AG04450 (cell line): ENCODE measurements at regions of chr13 and their contacts with region 1.

Region 1: DNA sequence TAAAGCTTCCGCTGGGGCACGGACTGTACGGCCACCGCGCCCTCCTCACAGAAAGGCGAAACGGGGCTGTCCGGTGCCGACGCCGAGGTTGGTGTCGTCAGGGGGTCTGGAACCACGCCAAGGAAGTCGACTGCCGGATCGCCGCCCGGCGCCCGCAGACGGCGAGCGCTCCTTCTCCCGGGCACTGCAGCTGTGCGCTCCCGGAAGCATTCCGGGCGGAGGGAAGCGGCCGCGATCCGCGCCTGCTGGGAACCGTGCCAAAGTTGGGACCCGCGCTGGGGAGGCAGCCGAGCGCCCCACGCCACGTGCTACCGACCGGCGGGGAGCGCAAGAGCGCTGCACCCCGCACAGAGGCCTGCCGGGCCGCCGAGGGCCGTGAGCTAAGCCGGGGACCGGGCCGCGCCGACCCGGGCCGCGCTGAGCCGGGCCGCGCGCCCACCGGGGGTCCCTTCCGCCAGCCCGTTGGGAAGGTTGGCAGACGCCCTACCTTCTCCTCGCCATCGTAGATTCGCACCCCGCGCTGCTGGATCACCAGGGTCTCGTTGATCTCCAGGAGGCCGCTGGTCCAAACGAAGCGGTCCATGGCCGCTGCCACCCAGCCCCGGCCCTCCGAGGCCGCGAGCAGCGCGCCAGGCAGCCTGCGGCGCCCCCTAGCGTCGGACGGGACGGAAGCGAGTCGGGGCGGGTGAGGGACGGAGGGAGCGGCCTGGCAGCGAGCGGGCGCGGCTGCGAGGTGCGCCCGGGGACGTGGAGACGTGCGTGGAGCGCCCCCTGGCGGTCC is at the start of gene VPS36:
- DNase-seq: peak; percentile 83
- H3K4me3 ChIP-seq: peak within 1 kb of the TSS; percentile 87
- H3K27ac ChIP-seq: peak within 1 kb of the TSS; percentile 70
- H3K27me3 ChIP-seq: no peaks in the 10 kb centered on the region
- CTCF ChIP-seq: peak; percentile 88
- polyA plus RNA-seq, gene VPS36: 20.5 and 24.2 TPM in 2 replicates

Region 2: GRCh38 chr13:52141297-52141696 is 308.9 kb before region 1 on chr13:
- CTCF ChIA-PET with region 1: interaction called, 10 read pairs
- POLR2A ChIA-PET with region 1: no interaction called
- DNase-seq: no peak
- H3K4me3 ChIP-seq: no peak overlapping the region
- H3K27ac ChIP-seq: no peak overlapping the region
- H3K27me3 ChIP-seq: no peaks in the 10 kb centered on the region
- CTCF ChIP-seq: 0 out of 2 replicates have a peak, but pooled peaks have one; percentile 11

Region 3: DNA sequence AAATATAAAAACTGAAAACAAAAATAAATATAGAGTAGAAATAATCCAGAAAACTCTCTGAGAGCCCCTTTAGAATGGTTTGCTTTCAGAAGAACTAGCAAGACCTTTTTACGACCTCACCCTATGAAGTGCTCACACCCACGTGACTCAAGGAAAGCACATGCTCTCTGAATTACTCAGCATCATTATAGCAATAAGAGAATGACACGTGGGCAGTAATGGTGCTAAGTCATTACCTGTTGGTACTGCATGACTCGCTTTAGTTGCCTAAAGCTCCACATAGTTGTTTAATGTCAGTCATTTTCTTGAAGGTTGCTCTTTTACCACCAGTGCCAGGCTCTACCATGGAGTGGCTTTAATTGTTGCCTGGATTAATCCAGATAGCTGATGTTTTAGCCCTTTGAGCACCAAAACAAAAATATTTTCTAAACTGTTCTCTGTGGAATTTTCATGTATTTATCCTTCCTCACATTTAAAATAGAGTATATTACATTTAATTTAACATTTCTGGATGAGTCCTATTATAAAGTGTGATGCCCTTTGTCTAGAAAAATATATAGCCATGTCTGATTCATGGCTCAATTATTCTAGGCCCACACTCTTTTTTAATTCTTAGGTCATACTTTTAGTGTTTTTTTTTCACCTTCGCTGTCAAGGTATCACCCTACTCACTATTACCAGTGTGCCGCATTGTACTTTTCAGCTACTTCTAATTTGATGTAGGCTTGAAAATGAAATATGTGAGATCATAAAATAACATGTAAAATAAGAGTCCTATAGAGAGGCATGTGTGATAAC is 101.0 kb before region 1 on chr13:
- CTCF ChIA-PET with region 1: interaction called, 95 read pairs
- POLR2A ChIA-PET with region 1: interaction called, 4 read pairs
- DNase-seq: no peak
- H3K4me3 ChIP-seq: no peak overlapping the region
- H3K27ac ChIP-seq: peak overlapping the region; percentile 62
- H3K27me3 ChIP-seq: no peaks in the 10 kb centered on the region
- CTCF ChIP-seq: no peak

Region 4: GRCh38 chr13:52374848-52375411 is 75.3 kb before region 1 on chr13:
- CTCF ChIA-PET with region 1: interaction called, 13 read pairs
- POLR2A ChIA-PET with region 1: no interaction called
- DNase-seq: no peak
- H3K4me3 ChIP-seq: no peak overlapping the region
- H3K27ac ChIP-seq: no peak overlapping the region
- H3K27me3 ChIP-seq: no peaks in the 10 kb centered on the region
- CTCF ChIP-seq: no peak

Region 5: GRCh38 chr13:52405767-52406494 is 44.3 kb before region 1 on chr13 and contains the start of gene THSD1:
- CTCF ChIA-PET with region 1: interaction called, 40 read pairs
- POLR2A ChIA-PET with region 1: no interaction called
- DNase-seq: no peak
- H3K4me3 ChIP-seq: peak within 1 kb of the TSS; percentile 74
- H3K27ac ChIP-seq: no peak within 1 kb of the TSS
- H3K27me3 ChIP-seq: no peaks in the 10 kb centered on the region
- CTCF ChIP-seq: no peak
- polyA plus RNA-seq, gene THSD1: 7.9 and 8.3 TPM in 2 replicates